ENCODE measurements at regions of chr22 and their contacts with region 1.

Region 1: DNA sequence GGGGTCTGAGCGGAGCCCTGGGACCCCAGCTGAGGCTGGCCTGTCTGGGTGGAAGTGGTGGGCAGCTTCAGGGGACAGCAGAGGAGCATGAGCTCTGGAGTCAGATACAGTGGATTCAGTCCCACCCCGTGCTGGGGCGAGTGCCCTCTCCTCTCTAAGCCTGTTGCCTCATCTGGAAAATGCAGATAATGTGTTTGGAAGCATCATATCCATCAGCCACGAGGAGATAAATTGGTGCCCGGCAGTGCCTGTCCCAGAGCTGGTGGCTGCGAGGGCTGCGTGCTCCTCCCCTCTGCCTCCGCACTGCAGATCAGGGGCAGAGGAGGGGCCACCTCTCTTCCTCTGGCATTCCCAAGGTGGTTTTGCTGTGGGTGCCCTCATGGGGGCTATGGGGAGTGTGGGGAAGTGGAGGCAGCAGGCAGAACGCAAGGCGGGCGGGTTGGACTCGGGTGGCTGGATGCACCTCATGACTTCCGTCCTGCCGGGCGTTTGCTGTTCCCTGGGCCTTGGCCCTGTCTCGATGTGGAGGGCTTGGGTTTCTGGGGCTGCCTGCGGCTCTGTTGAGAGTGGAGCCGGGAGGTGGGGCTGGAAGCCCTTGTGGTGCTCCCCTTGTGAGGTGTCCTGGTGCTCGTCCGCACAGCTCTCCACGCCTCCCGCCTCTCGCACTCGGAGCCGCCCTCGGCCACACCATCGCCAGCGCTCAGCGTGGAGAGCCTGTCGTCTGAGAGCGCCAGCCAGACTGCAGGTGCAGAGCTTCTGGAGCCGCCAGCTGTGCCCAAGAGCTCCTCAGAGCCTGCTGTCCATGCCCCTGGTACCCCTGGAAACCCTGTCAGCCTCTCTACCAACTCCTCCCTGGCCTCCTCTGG is 20.9 kb downstream of the MICALL1 start:
- DNase-seq: no peak
- ATAC-seq: no peak
- H3K4me3 Mint-ChIP-seq: no peak overlapping the region
- H3K27ac Mint-ChIP-seq: no peak overlapping the region
- H3K4me1 Mint-ChIP-seq: no peaks in the 10 kb centered on the region
- H3K27me3 Mint-ChIP-seq: no peaks in the 10 kb centered on the region

Region 2: GRCh38 chr22:38835888-38836301 is 908.9 kb after region 1 on chr22:
- CTCF ChIA-PET with region 1: no interaction called
- POLR2A ChIA-PET with region 1: no interaction called
- intact Hi-C with region 1: loop called in 1 of 2 experiments (anchors 5 kb)
- DNase-seq: no peak
- ATAC-seq: no peak
- H3K4me3 Mint-ChIP-seq: no peak overlapping the region
- H3K27ac Mint-ChIP-seq: no peak overlapping the region
- H3K4me1 Mint-ChIP-seq: peaks cover 4% of the 10 kb centered on the region
- H3K27me3 Mint-ChIP-seq: peaks cover 5% of the 10 kb centered on the region

Measured in activated CD4-positive, alpha-beta T cell treated with anti-CD3 and anti-CD28 coated beads for 36 hours (primary cell).